Astrocyte of the cerebellum (primary cell): ENCODE measurements at regions of chr1 and their contacts with region 1.

Region 1: GRCh38 chr1:186689907-186690306 is 9.7 kb upstream of the PTGS2 start:
- DNase-seq: no peak
- H3K4me3 ChIP-seq: no peak overlapping the region
- CTCF ChIP-seq: no peak

Region 2: GRCh38 chr1:186775881-186776560 is 86.1 kb after region 1 on chr1:
- in situ Hi-C with region 1: loop called (anchors 5 kb)
- DNase-seq: no peak
- H3K4me3 ChIP-seq: no peak overlapping the region
- CTCF ChIP-seq: no peak